Posterior vena cava (tissue), 2 donors: ENCODE measurements at regions of chr15 and their contacts with region 1.

Region 1: GRCh38 chr15:65298731-65299130 is 2.9 kb downstream of the RNU5A-1 start:
- DNase-seq: peak; percentile 34

Region 2: DNA sequence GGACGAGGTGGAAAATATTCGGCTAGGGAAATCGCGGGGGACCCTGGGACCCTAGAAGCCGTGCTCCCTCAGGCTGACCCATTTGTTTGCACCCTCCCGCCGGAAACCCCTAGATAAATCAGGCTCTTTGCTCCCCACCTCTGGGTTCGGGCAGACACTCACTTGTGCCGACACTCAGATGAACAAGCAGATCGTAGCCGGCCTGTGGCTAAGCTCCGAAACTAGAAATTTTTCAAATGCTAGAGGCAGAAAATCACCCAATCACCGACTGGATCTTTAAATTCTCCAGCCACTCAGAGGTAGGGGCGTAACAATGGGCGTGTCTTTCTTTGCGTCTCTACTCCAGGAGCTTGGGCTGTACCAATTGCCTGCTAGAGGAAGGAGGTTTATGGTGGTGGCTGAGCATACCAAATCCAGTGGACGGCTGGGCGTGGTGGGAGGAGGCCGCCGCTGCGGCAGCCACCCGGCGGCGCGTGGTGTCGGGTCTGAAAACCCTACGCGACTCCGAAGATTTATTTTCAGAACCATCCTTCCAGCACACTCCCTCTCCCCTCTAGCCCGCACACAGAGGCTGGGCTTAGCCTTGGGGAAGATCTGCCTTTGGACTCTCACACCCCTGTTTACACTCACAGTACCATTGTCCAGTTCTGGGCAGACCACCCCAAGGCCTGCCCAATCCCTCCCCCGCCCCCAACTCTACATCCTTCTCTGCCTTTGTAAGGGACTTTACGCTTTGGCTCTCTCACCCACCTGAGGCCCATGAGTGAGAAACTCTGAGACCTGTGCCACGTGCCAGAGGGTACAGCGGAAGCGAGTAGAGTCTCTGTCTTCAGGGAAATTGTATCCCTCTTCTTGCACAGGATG is 473.1 kb before region 1 on chr15 and contains the start of gene PIF1:
- intact Hi-C with region 1: loop called in 1 of 2 experiments (anchors 5 kb)
- DNase-seq: peak; percentile 92
- total RNA-seq, gene PIF1: 0.95 to 1.9 TPM

Region 3: DNA sequence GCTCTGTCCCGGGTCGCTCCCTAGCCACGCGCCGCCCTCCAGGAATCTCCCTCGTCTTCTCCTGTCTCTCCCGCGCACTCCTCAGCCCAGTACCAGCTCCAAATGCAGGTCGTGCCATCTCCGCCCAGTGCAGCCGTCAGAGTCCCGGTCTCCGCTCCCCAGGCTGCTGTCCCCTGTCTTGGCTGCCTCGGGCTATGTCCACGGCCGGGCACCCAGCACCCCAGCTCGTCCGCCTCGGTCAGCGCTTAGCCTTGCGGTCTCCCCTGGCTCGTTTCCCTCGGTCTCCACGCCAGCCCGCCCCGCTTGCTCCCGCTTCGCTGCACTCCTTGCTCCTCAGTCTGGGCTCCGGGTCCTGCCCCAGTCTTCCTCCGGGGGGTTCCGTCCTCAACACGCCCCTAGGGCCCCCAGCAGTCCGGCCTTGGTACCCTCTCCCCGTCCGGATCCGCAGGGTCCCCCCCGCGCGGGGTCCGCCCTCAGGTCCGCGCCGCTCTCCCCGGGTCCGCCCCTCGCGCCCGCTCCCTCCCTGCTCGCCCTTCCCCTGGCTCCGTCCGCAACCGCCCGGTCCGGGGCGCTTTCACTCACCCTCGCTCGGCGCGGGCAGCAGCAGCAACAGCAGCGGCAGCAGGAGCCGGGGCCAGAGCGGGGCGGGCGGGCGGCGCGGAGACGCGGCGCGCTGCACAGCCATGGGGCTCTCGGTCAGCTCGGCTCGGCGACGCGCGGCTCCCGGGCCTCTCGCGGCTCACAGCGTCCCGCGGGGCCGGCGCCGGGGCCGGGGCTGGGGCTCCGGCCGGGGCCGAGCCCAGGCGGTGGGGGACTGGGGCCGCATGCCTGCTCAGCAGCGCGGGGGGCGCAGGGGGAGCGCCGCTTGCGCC is 78.6 kb after region 1 on chr15:
- intact Hi-C with region 1: no loop called
- DNase-seq: peak; percentile 82